Psoas muscle (tissue), 8 donors: ENCODE measurements at regions of chr1 and their contacts with region 1.

Region 1: DNA sequence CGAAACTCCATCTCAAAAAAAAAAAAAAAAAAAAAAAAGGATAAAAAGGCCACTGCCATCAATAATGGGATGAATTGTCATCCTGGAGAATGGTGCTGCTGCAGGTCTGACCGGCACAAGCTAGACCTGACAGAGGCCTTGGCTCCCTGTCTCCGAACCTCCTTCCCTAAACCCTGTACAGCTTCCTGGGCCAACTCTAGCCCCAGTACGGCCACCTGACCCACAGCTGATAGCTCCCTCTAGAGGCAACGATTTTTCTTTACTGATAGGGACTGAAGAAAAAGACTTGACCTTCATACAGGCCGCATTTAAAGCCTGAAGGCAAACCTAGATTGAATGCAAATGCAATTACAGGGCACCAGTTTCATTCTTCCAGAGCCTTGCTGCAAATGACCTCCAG is 30.7 kb downstream of the NOL9 start:
- DNase-seq: peak in 1 of 2 donors; percentile 53
- ATAC-seq: peak; percentile 44 to 70 (median 62)
- H3K4me3 ChIP-seq: no peak overlapping the region
- H3K27ac ChIP-seq: no peak overlapping the region
- H3K4me1 ChIP-seq: peaks cover 9% of the 10 kb centered on the region
- H3K27me3 ChIP-seq: no peaks in the 10 kb centered on the region
- CTCF ChIP-seq: peak; percentile 36

Region 2: GRCh38 chr1:6157528-6158174 is 365.9 kb before region 1 on chr1:
- intact Hi-C with region 1: no loop called
- DNase-seq: no peak
- ATAC-seq: no peak
- H3K4me3 ChIP-seq: no peak overlapping the region
- H3K27ac ChIP-seq: no peak overlapping the region
- H3K4me1 ChIP-seq: no peaks in the 10 kb centered on the region
- H3K27me3 ChIP-seq: peaks cover 0 to 32% (median 11%) of the 10 kb centered on the region in 3 donors
- CTCF ChIP-seq: no peak

Region 3: GRCh38 chr1:6489799-6490180 is 33.8 kb before region 1 on chr1:
- intact Hi-C with region 1: loop called in 1 of 2 experiments (anchors 2 kb)
- DNase-seq: peak; percentile 70 to 80
- ATAC-seq: peak; percentile 61 to 79 (median 70)
- H3K4me3 ChIP-seq: peak overlapping the region; percentile 64
- H3K27ac ChIP-seq: no peak overlapping the region
- H3K4me1 ChIP-seq: peaks cover 7% of the 10 kb centered on the region
- H3K27me3 ChIP-seq: peaks cover 0 to 27% (median 4%) of the 10 kb centered on the region in 3 donors
- CTCF ChIP-seq: peak; percentile 78

Region 4: DNA sequence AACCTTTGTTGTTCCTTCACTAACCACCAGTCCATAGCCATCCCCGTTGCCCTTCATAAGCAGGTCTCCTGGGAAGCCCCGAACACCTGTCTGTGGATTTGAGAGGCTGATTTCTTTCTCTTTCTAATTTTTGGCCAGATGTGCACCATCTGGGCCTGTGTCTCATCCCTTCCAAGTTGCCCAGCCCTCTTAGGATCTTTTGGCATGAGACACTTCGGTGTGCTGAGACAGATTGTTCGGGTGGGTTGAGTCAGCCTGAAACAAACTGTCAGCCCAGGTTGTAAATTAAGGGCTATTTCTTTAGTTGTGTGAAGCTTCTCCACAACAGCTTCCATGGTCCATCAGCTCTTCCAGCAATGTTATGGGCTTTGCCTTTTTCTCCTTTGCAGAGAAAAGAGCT is 179.4 kb after region 1 on chr1:
- intact Hi-C with region 1: no loop called
- DNase-seq: no peak
- ATAC-seq: no peak
- H3K4me3 ChIP-seq: no peak overlapping the region
- H3K27ac ChIP-seq: no peak overlapping the region
- H3K4me1 ChIP-seq: peaks cover 21% of the 10 kb centered on the region
- H3K27me3 ChIP-seq: peaks cover 0 to 4% (median 0%) of the 10 kb centered on the region in 3 donors
- CTCF ChIP-seq: no peak